Left lung (tissue), 14 donors: ENCODE measurements at regions of chr2 and their contacts with region 1.

Region 1: DNA sequence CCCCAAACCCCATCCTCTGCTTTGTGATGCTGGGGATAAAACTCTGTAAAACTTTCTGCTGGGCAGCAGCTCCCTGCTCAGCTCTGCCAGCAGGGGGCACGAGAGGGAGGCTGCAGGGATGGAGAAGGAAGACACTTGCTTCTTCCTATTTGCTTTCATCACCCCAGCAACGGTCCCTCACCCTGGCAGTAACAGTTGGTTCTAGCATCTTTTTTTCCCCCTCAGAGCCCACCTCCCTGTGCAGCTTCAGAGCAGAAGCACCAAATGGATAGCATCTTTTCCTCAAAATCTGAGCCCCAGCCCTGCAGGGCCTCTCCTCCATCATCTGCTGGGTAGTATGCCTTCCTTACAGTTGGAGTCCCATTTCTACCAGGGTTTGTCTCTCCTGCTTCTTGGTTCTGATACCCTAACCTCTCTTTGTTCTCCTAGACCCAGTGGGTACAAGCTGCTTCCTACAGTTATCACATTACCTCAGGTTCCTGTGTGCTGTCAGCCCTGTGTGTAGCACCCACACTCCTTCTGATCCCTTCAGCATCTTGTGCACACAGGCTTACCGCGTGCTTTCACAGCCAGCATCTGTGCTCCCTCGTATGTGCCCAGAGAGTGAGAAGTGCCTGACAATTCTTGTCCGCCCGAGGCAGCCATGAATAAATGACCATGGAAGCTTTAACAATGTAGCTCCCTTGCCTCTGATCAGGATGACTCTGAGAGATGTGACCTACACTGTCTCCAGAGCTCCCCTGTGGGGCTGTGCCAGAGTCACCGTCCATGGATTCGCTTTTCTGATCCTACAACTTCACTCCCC is 14.5 kb downstream of the CKAP2L start:
- DNase-seq: peak; percentile 56 to 95 (median 84)
- ATAC-seq: peak; percentile 96
- H3K4me3 ChIP-seq: no peak overlapping the region
- H3K27ac ChIP-seq: peak overlapping the region in 1 of 2 donors; percentile 7
- H3K4me1 ChIP-seq: peaks cover 0 to 4% of the 10 kb centered on the region in 2 donors
- H3K27me3 ChIP-seq: no peaks in the 10 kb centered on the region
- CTCF ChIP-seq: peak; percentile 92 to 94

Region 2: DNA sequence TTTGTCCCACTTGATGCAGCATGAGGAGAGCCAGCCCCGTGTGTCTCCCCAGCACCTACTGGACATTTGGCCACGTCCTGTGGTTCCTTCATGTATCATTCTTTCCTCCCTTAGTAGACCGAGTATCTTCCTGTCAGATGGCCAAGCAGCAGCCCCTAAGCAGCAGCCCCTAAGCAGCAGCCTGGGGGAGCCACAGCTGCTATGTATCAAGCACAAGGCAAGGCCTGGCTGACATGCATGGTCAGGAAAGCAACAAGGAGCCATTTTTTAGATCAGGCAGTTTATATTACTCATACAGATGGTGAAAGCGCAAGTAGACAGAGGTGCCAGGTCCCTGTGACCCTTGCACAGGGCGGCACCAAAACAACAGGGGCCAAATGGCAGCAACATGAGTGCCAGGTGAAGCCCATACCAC is 143.5 kb before region 1 on chr2:
- intact Hi-C with region 1: no loop called
- DNase-seq: no peak
- ATAC-seq: no peak
- H3K4me3 ChIP-seq: no peak overlapping the region
- H3K27ac ChIP-seq: no peak overlapping the region
- H3K4me1 ChIP-seq: no peaks in the 10 kb centered on the region
- H3K27me3 ChIP-seq: no peaks in the 10 kb centered on the region
- CTCF ChIP-seq: no peak

Region 3: GRCh38 chr2:112884869-112885505 is 135.0 kb after region 1 on chr2:
- intact Hi-C with region 1: loop called in 1 of 2 experiments (anchors 10 kb)
- DNase-seq: peak in 3 of 4 donors; percentile 5 to 80 (median 57)
- ATAC-seq: peak; percentile 87
- H3K4me3 ChIP-seq: no peak overlapping the region
- H3K27ac ChIP-seq: no peak overlapping the region
- H3K4me1 ChIP-seq: peaks cover 3 to 53% of the 10 kb centered on the region in 2 donors
- H3K27me3 ChIP-seq: no peaks in the 10 kb centered on the region
- CTCF ChIP-seq: peak; percentile 78 to 87

Region 4: GRCh38 chr2:112941753-112942658 is 192.0 kb after region 1 on chr2:
- intact Hi-C with region 1: loop called in 1 of 2 experiments (anchors 5 kb)
- DNase-seq: peak; percentile 61 to 83 (median 82)
- ATAC-seq: peak; percentile 99
- H3K4me3 ChIP-seq: no peak overlapping the region
- H3K27ac ChIP-seq: no peak overlapping the region
- H3K4me1 ChIP-seq: no peaks in the 10 kb centered on the region
- H3K27me3 ChIP-seq: no peaks in the 10 kb centered on the region
- CTCF ChIP-seq: peak; percentile 80 to 84